CD8-positive, alpha-beta T cell (primary cell): ENCODE measurements at regions of chr7 and their contacts with region 1.

Region 1: DNA sequence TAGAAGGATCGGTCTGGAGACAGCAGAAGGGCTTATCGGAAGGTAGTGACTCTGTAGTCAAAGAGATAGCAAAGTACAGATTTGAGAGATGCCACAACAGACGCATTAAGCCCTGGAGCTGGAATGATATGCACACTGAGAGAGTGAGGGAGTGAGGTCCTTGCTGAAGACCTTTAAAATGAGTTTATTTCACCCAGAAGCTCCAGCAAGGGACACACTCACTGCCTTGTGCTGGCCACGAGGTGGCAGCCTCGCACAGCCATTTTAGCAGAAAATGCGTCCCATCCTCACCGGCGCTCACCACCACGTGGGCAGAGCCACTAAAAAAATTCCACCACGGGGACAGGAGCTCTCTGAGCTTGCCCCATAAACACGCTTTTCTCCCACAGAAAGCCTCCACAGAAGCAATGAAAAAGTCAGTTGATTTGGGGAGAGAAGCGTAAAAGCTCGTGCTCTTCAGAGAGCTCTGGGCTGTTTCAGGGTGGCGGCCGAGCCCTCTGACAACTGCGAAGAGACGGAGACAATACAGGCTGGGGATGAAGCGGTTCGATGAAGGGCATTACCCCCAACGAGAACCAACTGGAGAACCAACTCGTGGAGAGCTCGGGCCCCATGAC is 163.0 kb upstream of the KLF14 start:
- DNase-seq: peak; percentile 51 to 89 (median 70)
- ATAC-seq: peak; percentile 70
- H3K4me3 ChIP-seq: no peak overlapping the region
- H3K4me3 Mint-ChIP-seq: no peak overlapping the region
- H3K27ac ChIP-seq: peak overlapping the region in 1 of 2 experiments; percentile 18
- H3K27ac Mint-ChIP-seq: peak overlapping the region; percentile 24
- H3K4me1 ChIP-seq: peaks cover 38% of the 10 kb centered on the region
- H3K4me1 Mint-ChIP-seq: peaks cover 70% of the 10 kb centered on the region
- H3K27me3 ChIP-seq: no peaks in the 10 kb centered on the region
- H3K27me3 Mint-ChIP-seq: no peaks in the 10 kb centered on the region
- CTCF ChIP-seq: peak; percentile 79

Region 2: DNA sequence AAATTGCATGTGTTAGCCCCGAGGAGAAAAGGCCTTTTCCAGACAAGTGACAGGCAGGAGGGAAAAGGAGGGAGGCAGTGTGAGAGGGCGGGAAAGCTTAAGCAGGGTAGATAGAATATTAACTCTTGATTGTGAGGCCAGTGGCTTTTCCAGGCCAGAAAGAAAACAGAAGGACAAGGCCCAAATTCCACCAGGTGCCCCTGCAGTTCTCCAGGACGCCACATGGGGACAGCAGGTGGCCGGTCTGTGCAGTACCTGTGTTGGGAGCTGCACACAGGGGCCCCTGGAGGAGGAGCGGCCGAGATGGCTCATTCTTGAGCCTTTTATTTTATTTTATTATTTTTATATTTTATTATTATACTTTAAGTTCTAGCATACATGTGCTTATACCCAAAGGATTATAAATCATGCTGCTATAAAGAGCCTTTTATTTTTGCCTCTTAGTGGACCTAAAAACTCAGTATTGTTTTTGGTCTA is 21.7 kb before region 1 on chr7:
- CTCF ChIA-PET with region 1: interaction called, 18 read pairs
- POLR2A ChIA-PET with region 1: no interaction called
- intact Hi-C with region 1: no loop called
- DNase-seq: peak in 6 of 9 experiments; percentile 31 to 65 (median 50)
- ATAC-seq: peak; percentile 78
- H3K4me3 ChIP-seq: no peak overlapping the region
- H3K4me3 Mint-ChIP-seq: no peak overlapping the region
- H3K27ac ChIP-seq: no peak overlapping the region
- H3K27ac Mint-ChIP-seq: no peak overlapping the region
- H3K4me1 ChIP-seq: peaks cover 18% of the 10 kb centered on the region
- H3K4me1 Mint-ChIP-seq: peaks cover 41% of the 10 kb centered on the region
- H3K27me3 ChIP-seq: no peaks in the 10 kb centered on the region
- H3K27me3 Mint-ChIP-seq: no peaks in the 10 kb centered on the region
- CTCF ChIP-seq: peak; percentile 89

Region 3: DNA sequence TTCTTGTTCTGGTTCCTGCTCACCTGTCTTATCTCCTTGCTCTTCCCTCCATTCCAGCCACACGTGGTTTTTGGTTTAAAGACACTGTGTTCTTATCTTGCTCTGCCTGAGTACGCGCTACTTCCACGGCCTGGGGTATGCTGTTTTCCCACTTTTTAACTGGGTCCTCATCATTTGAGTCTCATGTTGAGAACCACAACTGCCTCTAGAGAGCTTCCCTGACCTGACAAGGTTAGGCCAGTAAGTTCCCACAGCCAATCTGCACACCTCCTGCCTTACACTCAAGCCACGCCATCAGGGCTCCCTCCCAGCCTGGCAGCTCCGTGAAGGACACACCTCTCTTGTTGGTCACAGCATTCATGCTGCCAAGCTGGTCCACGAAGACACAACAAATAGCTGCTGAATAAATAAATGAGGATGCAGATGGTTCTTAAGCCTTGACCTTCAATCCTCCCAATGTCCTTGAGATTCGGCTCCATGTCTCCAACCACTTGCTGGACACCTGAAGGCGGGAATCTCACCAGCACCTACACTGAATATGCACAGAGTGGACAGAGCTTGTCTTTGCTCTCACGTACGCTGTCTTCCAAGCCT is 38.7 kb after region 1 on chr7:
- CTCF ChIA-PET with region 1: interaction called, 14 read pairs
- POLR2A ChIA-PET with region 1: no interaction called
- intact Hi-C with region 1: no loop called
- DNase-seq: no peak
- ATAC-seq: no peak
- H3K4me3 ChIP-seq: no peak overlapping the region
- H3K4me3 Mint-ChIP-seq: no peak overlapping the region
- H3K27ac ChIP-seq: no peak overlapping the region
- H3K27ac Mint-ChIP-seq: no peak overlapping the region
- H3K4me1 ChIP-seq: peaks cover 35% of the 10 kb centered on the region
- H3K4me1 Mint-ChIP-seq: peaks cover 80% of the 10 kb centered on the region
- H3K27me3 ChIP-seq: no peaks in the 10 kb centered on the region
- H3K27me3 Mint-ChIP-seq: no peaks in the 10 kb centered on the region
- CTCF ChIP-seq: no peak

Region 4: DNA sequence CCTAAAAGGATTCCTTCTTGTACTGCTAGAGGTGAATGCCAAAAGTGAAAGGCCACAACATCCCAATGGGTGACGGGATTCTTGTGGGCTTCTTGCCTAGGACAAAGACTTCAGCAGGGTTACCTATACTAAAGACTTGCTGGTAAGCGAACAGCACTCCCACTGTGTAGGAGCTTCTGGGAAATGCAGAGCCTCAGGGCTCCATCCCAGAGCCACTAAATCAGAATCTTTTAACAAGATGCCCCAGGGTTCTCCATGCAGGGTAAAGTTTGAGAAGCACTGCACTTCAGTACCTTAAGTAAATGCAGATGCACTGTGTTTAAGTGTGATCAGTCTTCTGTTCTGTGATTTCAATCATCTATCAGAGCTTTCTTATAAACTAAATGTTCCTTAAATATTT is 103.9 kb after region 1 on chr7:
- CTCF ChIA-PET with region 1: interaction called, 19 read pairs
- POLR2A ChIA-PET with region 1: no interaction called
- intact Hi-C with region 1: no loop called
- DNase-seq: no peak
- ATAC-seq: no peak
- H3K4me3 ChIP-seq: no peak overlapping the region
- H3K4me3 Mint-ChIP-seq: no peak overlapping the region
- H3K27ac ChIP-seq: no peak overlapping the region
- H3K27ac Mint-ChIP-seq: no peak overlapping the region
- H3K4me1 ChIP-seq: peaks cover 55% of the 10 kb centered on the region
- H3K4me1 Mint-ChIP-seq: peaks cover 78% of the 10 kb centered on the region
- H3K27me3 ChIP-seq: no peaks in the 10 kb centered on the region
- H3K27me3 Mint-ChIP-seq: no peaks in the 10 kb centered on the region
- CTCF ChIP-seq: no peak

Region 5: GRCh38 chr7:131040467-131040932 is 143.5 kb after region 1 on chr7:
- CTCF ChIA-PET with region 1: interaction called, 59 read pairs
- POLR2A ChIA-PET with region 1: no interaction called
- intact Hi-C with region 1: loop called (anchors 1 kb)
- DNase-seq: peak in 3 of 9 experiments; percentile 49 to 81 (median 73)
- ATAC-seq: peak; percentile 54
- H3K4me3 ChIP-seq: no peak overlapping the region
- H3K4me3 Mint-ChIP-seq: peak overlapping the region; percentile 27
- H3K27ac ChIP-seq: peak overlapping the region in 1 of 2 experiments; percentile 3
- H3K27ac Mint-ChIP-seq: peak overlapping the region; percentile 24
- H3K4me1 ChIP-seq: peaks cover 46% of the 10 kb centered on the region
- H3K4me1 Mint-ChIP-seq: peaks cover 68% of the 10 kb centered on the region
- H3K27me3 ChIP-seq: no peaks in the 10 kb centered on the region
- H3K27me3 Mint-ChIP-seq: no peaks in the 10 kb centered on the region
- CTCF ChIP-seq: peak; percentile 94

Region 6: GRCh38 chr7:131513245-131514061 is 616.4 kb after region 1 on chr7:
- CTCF ChIA-PET with region 1: no interaction called
- POLR2A ChIA-PET with region 1: no interaction called
- intact Hi-C with region 1: loop called in 1 of 2 experiments (anchors 1 kb)
- DNase-seq: peak; percentile 42 to 82 (median 77)
- ATAC-seq: peak; percentile 100
- H3K4me3 ChIP-seq: no peak overlapping the region
- H3K4me3 Mint-ChIP-seq: no peak overlapping the region
- H3K27ac ChIP-seq: no peak overlapping the region
- H3K27ac Mint-ChIP-seq: no peak overlapping the region
- H3K4me1 ChIP-seq: peaks cover 9% of the 10 kb centered on the region
- H3K4me1 Mint-ChIP-seq: peaks cover 20% of the 10 kb centered on the region
- H3K27me3 ChIP-seq: no peaks in the 10 kb centered on the region
- H3K27me3 Mint-ChIP-seq: peaks cover 9% of the 10 kb centered on the region
- CTCF ChIP-seq: peak; percentile 74

Region 7: GRCh38 chr7:132351954-132352499 is 1455.0 kb after region 1 on chr7:
- CTCF ChIA-PET with region 1: no interaction called
- POLR2A ChIA-PET with region 1: no interaction called
- intact Hi-C with region 1: no loop called
- DNase-seq: no peak
- ATAC-seq: no peak
- H3K4me3 ChIP-seq: no peak overlapping the region
- H3K4me3 Mint-ChIP-seq: no peak overlapping the region
- H3K27ac ChIP-seq: no peak overlapping the region
- H3K27ac Mint-ChIP-seq: no peak overlapping the region
- H3K4me1 ChIP-seq: no peaks in the 10 kb centered on the region
- H3K4me1 Mint-ChIP-seq: no peaks in the 10 kb centered on the region
- H3K27me3 ChIP-seq: no peaks in the 10 kb centered on the region
- H3K27me3 Mint-ChIP-seq: peaks cover 30% of the 10 kb centered on the region
- CTCF ChIP-seq: no peak